PC-3 (cell line): ENCODE measurements at regions of chr4 and their contacts with region 1.

Region 1: GRCh38 chr4:62709618-62710252 is 1509.6 kb downstream of the ADGRL3 start:
- DNase-seq: peak; percentile 91
- ATAC-seq: peak; percentile 67
- H3K4me3 ChIP-seq: peak overlapping the region; percentile 64
- H3K27ac ChIP-seq: no peak overlapping the region
- H3K4me1 ChIP-seq: peaks cover 23% of the 10 kb centered on the region
- H3K27me3 ChIP-seq: no peaks in the 10 kb centered on the region
- CTCF ChIP-seq: peak; percentile 93

Region 2: GRCh38 chr4:62243895-62244294 is 465.8 kb before region 1 on chr4:
- CTCF ChIA-PET with region 1: interaction called, 4 read pairs
- POLR2A ChIA-PET with region 1: no interaction called
- intact Hi-C with region 1: loop called (anchors 1 kb)
- DNase-seq: peak; percentile 28
- ATAC-seq: peak; percentile 78
- H3K4me3 ChIP-seq: no peak overlapping the region
- H3K27ac ChIP-seq: no peak overlapping the region
- H3K4me1 ChIP-seq: no peaks in the 10 kb centered on the region
- H3K27me3 ChIP-seq: no peaks in the 10 kb centered on the region
- CTCF ChIP-seq: peak; percentile 47

Region 3: GRCh38 chr4:62408454-62408853 is 301.3 kb before region 1 on chr4:
- CTCF ChIA-PET with region 1: no interaction called
- POLR2A ChIA-PET with region 1: no interaction called
- intact Hi-C with region 1: loop called (anchors 5 kb)
- DNase-seq: peak; percentile 35
- ATAC-seq: no peak
- H3K4me3 ChIP-seq: no peak overlapping the region
- H3K27ac ChIP-seq: no peak overlapping the region
- H3K4me1 ChIP-seq: no peaks in the 10 kb centered on the region
- H3K27me3 ChIP-seq: no peaks in the 10 kb centered on the region
- CTCF ChIP-seq: peak; percentile 65

Region 4: DNA sequence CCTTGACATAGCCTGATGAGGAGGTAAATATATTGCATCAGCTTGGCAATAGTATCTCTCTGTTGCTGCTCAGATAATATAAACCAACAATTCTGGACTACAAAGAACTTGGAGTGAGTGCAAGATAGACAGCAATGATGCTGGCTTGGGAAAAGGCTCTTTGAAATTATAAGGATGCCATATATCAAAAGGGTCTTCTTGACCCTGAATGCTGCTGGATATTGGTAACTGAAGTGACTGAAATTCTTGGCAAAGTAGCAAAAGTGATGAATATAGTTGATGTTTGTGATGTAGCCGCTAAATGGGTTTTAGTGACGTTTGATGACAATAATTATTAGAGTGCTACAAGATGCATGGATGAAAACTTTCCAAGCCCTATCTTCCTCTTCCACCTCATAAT is 118.0 kb before region 1 on chr4:
- CTCF ChIA-PET with region 1: no interaction called
- POLR2A ChIA-PET with region 1: no interaction called
- intact Hi-C with region 1: loop called (anchors 1 kb)
- DNase-seq: no peak
- ATAC-seq: no peak
- H3K4me3 ChIP-seq: no peak overlapping the region
- H3K27ac ChIP-seq: no peak overlapping the region
- H3K4me1 ChIP-seq: no peaks in the 10 kb centered on the region
- H3K27me3 ChIP-seq: no peaks in the 10 kb centered on the region
- CTCF ChIP-seq: no peak

Region 5: DNA sequence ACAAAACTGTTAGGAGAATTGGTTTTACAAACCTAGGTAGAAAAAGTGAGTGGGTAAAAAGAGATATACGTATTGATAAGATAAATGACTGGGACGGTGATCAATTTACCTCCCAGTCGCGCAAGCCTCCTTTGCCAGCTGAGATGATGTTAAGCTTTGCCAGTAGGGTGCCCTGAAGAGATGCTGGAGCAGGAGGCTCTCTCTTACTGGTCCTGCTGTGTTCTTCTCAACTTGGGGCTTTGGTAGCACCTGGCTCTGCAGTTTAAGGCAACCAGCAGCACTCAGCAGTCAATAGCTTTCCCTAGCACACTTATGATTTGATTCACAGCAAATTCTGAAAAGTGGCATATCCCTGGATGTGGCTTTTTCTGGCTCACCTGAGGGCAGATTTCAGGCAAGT is 47.9 kb before region 1 on chr4:
- CTCF ChIA-PET with region 1: no interaction called
- POLR2A ChIA-PET with region 1: no interaction called
- intact Hi-C with region 1: no loop called
- DNase-seq: no peak
- ATAC-seq: no peak
- H3K4me3 ChIP-seq: no peak overlapping the region
- H3K27ac ChIP-seq: no peak overlapping the region
- H3K4me1 ChIP-seq: no peaks in the 10 kb centered on the region
- H3K27me3 ChIP-seq: no peaks in the 10 kb centered on the region
- CTCF ChIP-seq: no peak

Region 6: GRCh38 chr4:62881901-62882300 is 172.2 kb after region 1 on chr4:
- CTCF ChIA-PET with region 1: no interaction called
- POLR2A ChIA-PET with region 1: no interaction called
- intact Hi-C with region 1: loop called (anchors 1 kb)
- DNase-seq: peak; percentile 85
- ATAC-seq: peak; percentile 85
- H3K4me3 ChIP-seq: peak overlapping the region; percentile 33
- H3K27ac ChIP-seq: peak overlapping the region; percentile 95
- H3K4me1 ChIP-seq: peaks cover 28% of the 10 kb centered on the region
- H3K27me3 ChIP-seq: no peaks in the 10 kb centered on the region
- CTCF ChIP-seq: no peak